ENCODE measurements at regions of chr2 and their contacts with region 1.

Region 1: GRCh38 chr2:12416600-12416999 is 300.1 kb upstream of the TRIB2 start:
- H3K4me3 Mint-ChIP-seq: no peak overlapping the region
- H3K27ac Mint-ChIP-seq: no peak overlapping the region
- H3K4me1 Mint-ChIP-seq: peaks cover 8% of the 10 kb centered on the region
- H3K27me3 Mint-ChIP-seq: no peaks in the 10 kb centered on the region

Region 2: GRCh38 chr2:12050396-12050795 is 366.2 kb before region 1 on chr2:
- intact Hi-C with region 1: no loop called
- H3K4me3 Mint-ChIP-seq: no peak overlapping the region
- H3K27ac Mint-ChIP-seq: no peak overlapping the region
- H3K4me1 Mint-ChIP-seq: peaks cover 27% of the 10 kb centered on the region
- H3K27me3 Mint-ChIP-seq: peaks cover 9% of the 10 kb centered on the region

Region 3: GRCh38 chr2:12587729-12588522 is 171.3 kb after region 1 on chr2:
- intact Hi-C with region 1: no loop called
- H3K4me3 Mint-ChIP-seq: peak overlapping the region; percentile 48
- H3K27ac Mint-ChIP-seq: no peak overlapping the region
- H3K4me1 Mint-ChIP-seq: peaks cover 25% of the 10 kb centered on the region
- H3K27me3 Mint-ChIP-seq: peaks cover 50% of the 10 kb centered on the region

Region 4: GRCh38 chr2:12931186-12931844 is 514.7 kb after region 1 on chr2:
- intact Hi-C with region 1: loop called (anchors 5 kb)
- H3K4me3 Mint-ChIP-seq: no peak overlapping the region
- H3K27ac Mint-ChIP-seq: no peak overlapping the region
- H3K4me1 Mint-ChIP-seq: no peaks in the 10 kb centered on the region
- H3K27me3 Mint-ChIP-seq: peaks cover 33% of the 10 kb centered on the region

Region 5: DNA sequence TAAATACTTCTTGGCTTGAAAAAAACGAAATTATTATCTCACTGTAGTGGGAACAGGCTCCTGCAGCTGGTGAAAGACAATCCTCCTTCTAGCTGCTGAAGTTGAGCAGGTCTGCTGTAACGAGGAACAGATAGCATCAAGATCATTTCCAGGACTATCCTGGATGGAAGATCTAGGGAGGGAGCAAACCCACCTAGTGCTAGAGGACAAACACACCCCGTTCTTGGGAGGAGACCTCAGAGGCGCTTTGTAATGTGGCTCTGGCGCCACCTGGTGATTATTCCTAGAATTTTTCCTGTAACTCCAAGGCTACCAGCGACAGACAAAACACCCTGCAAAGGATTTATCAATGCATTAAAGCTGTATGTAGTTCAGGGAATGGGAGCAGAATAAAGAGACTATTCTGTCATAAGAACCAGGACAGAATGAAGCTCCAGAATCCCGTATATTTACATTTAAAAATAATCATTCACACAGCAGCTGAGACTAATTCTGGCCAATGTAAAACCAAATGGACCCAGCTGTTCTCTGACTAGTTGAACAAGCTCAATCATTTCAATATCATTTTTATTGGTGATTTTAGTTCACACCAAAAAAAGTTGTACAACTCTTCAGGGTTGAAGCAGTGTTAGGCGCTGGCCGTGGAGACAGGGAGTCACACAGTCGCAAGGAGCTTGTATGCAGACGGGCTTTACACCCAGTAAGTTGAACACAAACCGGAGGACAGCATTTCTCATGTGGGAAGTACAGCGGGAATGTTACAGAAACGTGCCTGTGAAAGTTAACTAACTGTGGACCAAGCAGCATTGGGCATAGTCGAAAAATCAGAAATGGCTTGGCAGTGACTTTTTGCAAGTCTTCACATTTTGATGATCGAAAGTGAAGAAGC is 590.5 kb after region 1 on chr2:
- intact Hi-C with region 1: loop called (anchors 10 kb)
- H3K4me3 Mint-ChIP-seq: no peak overlapping the region
- H3K27ac Mint-ChIP-seq: no peak overlapping the region
- H3K4me1 Mint-ChIP-seq: peaks cover 11% of the 10 kb centered on the region
- H3K27me3 Mint-ChIP-seq: peaks cover 25% of the 10 kb centered on the region